Right ventricle myocardium inferior (tissue), 1 donor: ENCODE measurements at regions of chr10 and their contacts with region 1.

Region 1: DNA sequence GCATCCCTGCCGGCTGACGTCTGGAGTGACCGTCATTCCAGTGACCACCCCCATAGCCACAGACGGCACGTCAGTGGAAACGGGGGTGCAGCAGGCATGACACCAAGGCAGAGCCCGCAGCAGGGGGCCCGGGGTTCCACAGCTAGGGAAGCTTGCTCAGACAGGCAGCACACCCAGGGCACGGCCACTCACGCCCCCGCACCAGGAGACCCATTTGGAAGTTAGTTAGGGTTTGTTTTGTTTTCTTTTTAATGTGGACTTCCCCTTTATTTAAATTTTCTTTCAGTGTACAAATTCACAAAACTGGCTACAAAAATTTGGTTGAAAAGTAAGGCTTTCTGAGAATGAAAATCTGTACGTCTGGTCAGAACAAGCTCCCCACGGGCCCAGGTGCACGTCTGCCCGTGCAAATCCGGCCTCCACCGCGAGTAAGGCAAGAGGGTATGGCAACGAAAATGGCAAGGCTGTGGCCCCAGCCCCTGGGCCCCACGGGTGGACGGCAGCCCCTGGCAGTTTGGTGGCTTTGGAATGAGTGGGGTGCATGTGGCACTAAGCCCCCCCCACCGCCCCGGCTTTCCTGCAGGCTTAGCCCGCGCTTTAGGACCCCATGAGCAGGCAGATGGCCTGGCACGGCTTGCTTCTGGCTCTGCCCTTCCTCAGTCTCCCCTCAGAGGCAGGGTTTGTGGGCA is 124.2 kb downstream of the FAM53B start:
- DNase-seq: no peak
- ATAC-seq: no peak

Region 2: GRCh38 chr10:124539935-124540641 is 79.9 kb before region 1 on chr10:
- intact Hi-C with region 1: loop called (anchors 5 kb)
- DNase-seq: peak; percentile 86
- ATAC-seq: peak; percentile 87

Region 3: GRCh38 chr10:124560377-124561105 is 59.4 kb before region 1 on chr10:
- intact Hi-C with region 1: loop called (anchors 5 kb)
- DNase-seq: peak; percentile 70
- ATAC-seq: peak; percentile 87

Region 4: GRCh38 chr10:124943301-124944092 is 323.6 kb after region 1 on chr10:
- intact Hi-C with region 1: no loop called
- DNase-seq: no peak
- ATAC-seq: peak; percentile 43